ENCODE measurements at regions of chr17 and their contacts with region 1.

Region 1: DNA sequence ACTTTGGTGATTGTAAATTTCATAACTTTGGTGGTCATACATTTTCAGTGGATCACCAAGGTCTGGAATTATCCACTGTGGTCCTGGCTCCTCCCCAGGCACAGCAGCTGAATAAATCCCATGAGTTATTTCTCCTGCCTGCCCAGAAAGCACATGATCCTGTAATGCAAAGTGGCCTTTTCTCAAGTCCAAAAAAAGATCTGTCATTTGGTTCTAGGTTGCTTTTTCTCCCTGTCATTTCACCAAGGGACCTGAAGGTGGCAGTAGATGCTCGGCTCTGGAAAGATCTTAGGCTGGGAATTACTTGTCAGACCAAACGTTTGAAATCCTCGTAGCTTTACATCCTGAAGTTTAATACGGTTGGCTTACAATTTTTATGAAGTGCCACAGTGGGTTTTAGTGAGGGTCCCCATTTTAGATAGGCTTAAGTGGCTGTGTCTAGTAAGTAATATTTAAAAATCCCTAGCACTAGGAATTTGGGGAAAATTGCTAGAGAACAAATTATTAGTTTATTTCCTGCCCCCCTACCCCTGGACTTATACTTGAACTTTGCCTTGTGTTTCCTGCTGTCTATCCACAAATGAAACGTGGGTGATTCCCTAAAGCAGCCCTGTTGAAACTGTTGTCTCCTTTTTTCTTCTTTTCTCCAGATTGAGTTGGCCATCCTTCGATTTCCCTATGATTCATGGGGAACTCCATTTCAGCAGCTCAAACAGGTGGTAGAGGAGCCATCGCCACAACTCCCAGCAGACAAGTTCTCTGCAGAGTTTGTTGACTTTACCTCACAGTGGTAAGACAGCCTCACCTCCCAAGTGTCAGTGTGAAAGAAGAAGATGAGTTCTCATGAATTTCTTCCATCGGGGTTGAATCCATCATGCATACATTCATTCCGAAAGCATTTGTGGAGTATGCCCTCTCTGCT is 111.7 kb downstream of the MAP2K6 start:
- DNase-seq: peak; percentile 48
- ATAC-seq: peak; percentile 80
- H3K4me3 ChIP-seq: no peak overlapping the region
- H3K27ac ChIP-seq: no peak overlapping the region
- H3K4me1 ChIP-seq: no peaks in the 10 kb centered on the region
- H3K27me3 ChIP-seq: no peaks in the 10 kb centered on the region
- CTCF ChIP-seq: peak; percentile 92

Region 2: GRCh38 chr17:70060415-70060814 is 534.2 kb after region 1 on chr17:
- CTCF ChIA-PET with region 1: interaction called, 11 read pairs
- POLR2A ChIA-PET with region 1: no interaction called
- in situ Hi-C with region 1: no loop called
- intact Hi-C with region 1: no loop called
- DNase-seq: no peak
- ATAC-seq: no peak
- H3K4me3 ChIP-seq: no peak overlapping the region
- H3K27ac ChIP-seq: no peak overlapping the region
- H3K4me1 ChIP-seq: no peaks in the 10 kb centered on the region
- H3K27me3 ChIP-seq: no peaks in the 10 kb centered on the region
- CTCF ChIP-seq: no peak

Region 3: DNA sequence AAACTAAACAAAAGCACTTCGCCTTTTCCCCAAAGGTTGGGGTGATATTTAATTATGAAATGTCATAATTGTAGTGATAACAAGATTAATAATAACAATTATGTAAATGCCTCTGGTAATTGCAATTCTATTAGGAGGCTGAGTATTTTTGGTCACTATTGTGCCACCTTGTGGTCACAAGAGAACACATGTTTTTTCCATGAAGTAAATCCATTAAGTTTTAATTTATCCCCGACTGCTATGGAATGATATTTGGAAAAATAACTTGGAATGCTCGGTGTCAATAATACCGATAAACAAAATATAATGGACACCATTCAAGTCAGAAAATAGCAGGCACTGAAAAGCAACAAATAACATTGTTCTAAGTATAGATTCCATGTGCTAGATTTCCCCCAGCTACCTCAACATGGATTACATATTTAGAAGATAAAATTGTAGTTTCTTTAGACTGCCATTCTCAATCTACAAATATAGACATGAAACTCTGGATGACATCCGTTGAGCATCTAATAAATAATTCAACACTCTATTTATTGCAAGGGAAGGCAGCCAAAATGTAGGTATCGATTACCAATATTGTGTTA is 618.2 kb after region 1 on chr17:
- CTCF ChIA-PET with region 1: no interaction called
- POLR2A ChIA-PET with region 1: no interaction called
- in situ Hi-C with region 1: no loop called
- intact Hi-C with region 1: loop called (anchors 5 kb)
- DNase-seq: no peak
- ATAC-seq: no peak
- H3K4me3 ChIP-seq: no peak overlapping the region
- H3K27ac ChIP-seq: no peak overlapping the region
- H3K4me1 ChIP-seq: no peaks in the 10 kb centered on the region
- H3K27me3 ChIP-seq: no peaks in the 10 kb centered on the region
- CTCF ChIP-seq: peak; percentile 68; the same call in 1 of the 2 replicates

Region 4: DNA sequence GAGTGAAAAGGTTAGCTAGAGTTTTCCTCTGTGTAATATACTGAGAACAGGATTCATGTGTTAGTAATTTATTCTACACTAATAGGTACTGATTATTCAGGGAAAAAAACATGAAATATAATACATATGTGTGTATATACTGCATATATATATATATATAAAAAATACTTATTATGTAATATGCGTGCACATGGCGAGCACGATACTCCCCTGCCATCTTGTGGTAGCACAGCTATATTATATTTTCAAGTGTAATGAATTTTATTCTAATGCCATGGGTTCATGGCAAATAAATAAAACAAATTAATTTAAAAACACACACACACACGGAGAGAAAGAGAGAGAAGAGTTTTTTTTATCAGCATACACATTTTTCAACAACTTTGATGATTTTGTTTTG is 1103.7 kb after region 1 on chr17:
- CTCF ChIA-PET with region 1: interaction called, 3 read pairs
- POLR2A ChIA-PET with region 1: no interaction called
- in situ Hi-C with region 1: no loop called
- intact Hi-C with region 1: loop called (anchors 5 kb)
- DNase-seq: no peak
- ATAC-seq: no peak
- H3K4me3 ChIP-seq: no peak overlapping the region
- H3K27ac ChIP-seq: no peak overlapping the region
- H3K4me1 ChIP-seq: no peaks in the 10 kb centered on the region
- H3K27me3 ChIP-seq: no peaks in the 10 kb centered on the region; the same call in 1 of the 2 replicates
- CTCF ChIP-seq: peak; percentile 51; the same call in 1 of the 2 replicates